Activated CD4-positive, alpha-beta memory T cell treated with anti-CD3 and anti-CD28 coated beads for 36 hours (primary cell): ENCODE measurements at regions of chr11 and their contacts with region 1.

Region 1: DNA sequence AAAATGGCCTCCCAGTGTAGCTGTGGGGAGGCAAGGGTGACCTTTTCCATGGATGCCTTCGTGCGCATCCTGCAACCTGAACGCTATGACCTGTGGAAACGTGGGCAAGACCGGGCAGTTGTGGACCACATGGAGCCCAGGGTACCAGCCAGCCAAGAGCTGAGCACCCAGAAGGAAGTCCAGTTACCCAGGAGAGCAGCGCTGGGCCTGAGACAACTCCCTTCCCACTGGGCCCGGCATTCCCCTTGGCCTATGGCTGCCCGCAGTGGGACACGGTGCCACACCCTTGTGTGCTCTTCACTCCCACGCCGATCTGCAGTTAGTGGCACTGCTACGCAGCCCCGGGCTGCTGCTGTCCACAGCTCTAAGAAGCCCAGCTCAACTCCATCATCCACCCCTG is 24.8 kb downstream of the KDM4D start:
- DNase-seq: no peak
- H3K4me3 Mint-ChIP-seq: no peak overlapping the region
- H3K27ac Mint-ChIP-seq: no peak overlapping the region
- H3K4me1 Mint-ChIP-seq: no peaks in the 10 kb centered on the region
- H3K27me3 Mint-ChIP-seq: no peaks in the 10 kb centered on the region

Region 2: DNA sequence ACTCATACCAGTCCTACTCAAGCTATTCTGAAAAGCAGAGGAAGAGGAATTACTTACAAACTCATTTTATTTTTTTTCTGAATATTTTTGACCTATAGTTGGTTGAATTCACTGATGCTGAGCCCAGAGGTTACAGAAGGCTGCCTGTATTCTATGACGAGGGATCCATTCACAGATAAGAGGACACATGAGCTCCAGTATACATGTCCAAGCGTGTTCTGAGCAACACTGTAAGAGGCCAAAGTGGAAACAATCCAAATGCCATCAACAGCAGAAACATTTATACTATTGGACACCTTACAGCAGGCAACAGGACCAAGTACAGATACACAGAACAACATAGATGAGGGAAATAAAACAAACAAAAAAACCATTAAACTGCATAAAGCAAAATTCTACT is 37.0 kb after region 1 on chr11:
- CTCF ChIA-PET with region 1: no interaction called
- POLR2A ChIA-PET with region 1: no interaction called
- intact Hi-C with region 1: loop called (anchors 1 kb)
- DNase-seq: no peak
- H3K4me3 Mint-ChIP-seq: no peak overlapping the region
- H3K27ac Mint-ChIP-seq: no peak overlapping the region
- H3K4me1 Mint-ChIP-seq: peaks cover 2% of the 10 kb centered on the region
- H3K27me3 Mint-ChIP-seq: peaks cover 6% of the 10 kb centered on the region